ENCODE measurements at regions of chr6 and their contacts with region 1.

Region 1: GRCh38 chr6:97059473-97059872 is 134.9 kb downstream of the KLHL32 start:
- DNase-seq: peak in 2 of 5 donors; percentile 49 to 53
- H3K4me3 ChIP-seq: no peak overlapping the region
- H3K27ac ChIP-seq: no peak overlapping the region
- H3K4me1 ChIP-seq: no peaks in the 10 kb centered on the region
- H3K27me3 ChIP-seq: no peaks in the 10 kb centered on the region
- CTCF ChIP-seq: peak; percentile 59

Region 2: DNA sequence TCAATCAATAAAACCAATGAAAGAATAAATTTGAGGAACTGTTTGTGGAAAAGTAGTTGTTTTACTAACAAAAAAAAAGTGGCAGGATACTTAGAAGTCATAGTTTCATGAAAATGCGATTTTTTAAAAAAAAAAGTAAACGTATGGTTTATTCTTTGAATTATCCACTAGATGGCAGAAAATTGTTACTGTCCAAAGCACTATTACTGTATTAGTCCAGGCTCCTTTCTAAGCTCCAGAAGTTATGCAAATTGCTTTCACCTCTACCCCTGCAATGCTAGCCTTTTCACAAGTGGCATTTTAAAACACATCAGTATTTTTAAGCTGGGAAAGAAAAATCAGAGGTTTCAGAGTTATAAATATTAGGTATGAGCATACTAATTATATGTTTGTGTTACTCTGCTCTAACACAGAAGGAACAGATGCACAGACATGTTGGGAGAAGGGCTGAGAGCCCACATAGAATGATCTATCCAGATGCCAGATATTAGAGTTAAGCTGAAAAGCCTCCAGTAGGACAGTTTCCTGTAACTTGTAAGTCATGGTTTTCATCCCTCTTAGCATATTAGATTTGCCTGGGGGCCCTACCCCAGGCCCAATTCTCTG is 432.6 kb before region 1 on chr6:
- intact Hi-C with region 1: loop called (anchors 10 kb)
- DNase-seq: peak in 2 of 5 donors; percentile 51 to 68
- H3K4me3 ChIP-seq: no peak overlapping the region
- H3K27ac ChIP-seq: no peak overlapping the region
- H3K4me1 ChIP-seq: no peaks in the 10 kb centered on the region
- H3K27me3 ChIP-seq: no peaks in the 10 kb centered on the region
- CTCF ChIP-seq: no peak